Mammary epithelial cell (primary cell): ENCODE measurements at regions of chr3 and their contacts with region 1.

Region 1: GRCh38 chr3:57951066-57951882 is 56.9 kb upstream of the FLNB start:
- DNase-seq: peak; percentile 60
- H3K4me3 ChIP-seq: no peak overlapping the region
- H3K27ac ChIP-seq: peak overlapping the region; percentile 17
- H3K4me1 ChIP-seq: peaks cover 38% of the 10 kb centered on the region
- H3K27me3 ChIP-seq: no peaks in the 10 kb centered on the region
- CTCF ChIP-seq: no peak

Region 2: GRCh38 chr3:57582474-57583168 is 368.7 kb before region 1 on chr3:
- CTCF ChIA-PET with region 1: no interaction called
- dilution Hi-C with region 1: no loop called
- in situ Hi-C with region 1: no loop called
- intact Hi-C with region 1: no loop called
- DNase-seq: peak; percentile 79
- H3K4me3 ChIP-seq: no peak overlapping the region
- H3K27ac ChIP-seq: peak overlapping the region; percentile 59
- H3K4me1 ChIP-seq: peaks cover 7% of the 10 kb centered on the region
- H3K27me3 ChIP-seq: no peaks in the 10 kb centered on the region
- CTCF ChIP-seq: peak; percentile 35 to 69

Region 3: DNA sequence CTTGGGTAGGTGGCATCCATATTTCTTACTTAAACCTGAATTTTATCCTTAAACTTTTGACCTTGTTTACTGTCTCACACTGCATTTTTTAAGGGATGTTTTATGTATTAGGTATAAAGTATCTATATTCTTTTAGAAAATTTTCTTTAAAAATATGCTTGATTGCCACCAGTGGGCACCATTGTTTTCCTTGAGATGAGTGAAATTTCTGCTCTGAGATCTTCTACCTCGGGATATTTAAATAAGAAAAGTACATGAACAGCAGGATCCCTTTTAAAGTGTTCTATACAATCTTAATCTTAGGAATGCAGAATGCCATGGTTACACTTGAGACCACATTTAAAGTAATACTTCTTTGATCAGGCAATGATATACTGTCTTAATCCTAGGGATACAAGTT is 86.4 kb before region 1 on chr3:
- CTCF ChIA-PET with region 1: no interaction called
- dilution Hi-C with region 1: no loop called
- in situ Hi-C with region 1: no loop called
- intact Hi-C with region 1: loop called (anchors 2 kb)
- DNase-seq: no peak
- H3K4me3 ChIP-seq: no peak overlapping the region
- H3K27ac ChIP-seq: no peak overlapping the region
- H3K4me1 ChIP-seq: no peaks in the 10 kb centered on the region
- H3K27me3 ChIP-seq: no peaks in the 10 kb centered on the region
- CTCF ChIP-seq: peak; percentile 27 to 29

Region 4: DNA sequence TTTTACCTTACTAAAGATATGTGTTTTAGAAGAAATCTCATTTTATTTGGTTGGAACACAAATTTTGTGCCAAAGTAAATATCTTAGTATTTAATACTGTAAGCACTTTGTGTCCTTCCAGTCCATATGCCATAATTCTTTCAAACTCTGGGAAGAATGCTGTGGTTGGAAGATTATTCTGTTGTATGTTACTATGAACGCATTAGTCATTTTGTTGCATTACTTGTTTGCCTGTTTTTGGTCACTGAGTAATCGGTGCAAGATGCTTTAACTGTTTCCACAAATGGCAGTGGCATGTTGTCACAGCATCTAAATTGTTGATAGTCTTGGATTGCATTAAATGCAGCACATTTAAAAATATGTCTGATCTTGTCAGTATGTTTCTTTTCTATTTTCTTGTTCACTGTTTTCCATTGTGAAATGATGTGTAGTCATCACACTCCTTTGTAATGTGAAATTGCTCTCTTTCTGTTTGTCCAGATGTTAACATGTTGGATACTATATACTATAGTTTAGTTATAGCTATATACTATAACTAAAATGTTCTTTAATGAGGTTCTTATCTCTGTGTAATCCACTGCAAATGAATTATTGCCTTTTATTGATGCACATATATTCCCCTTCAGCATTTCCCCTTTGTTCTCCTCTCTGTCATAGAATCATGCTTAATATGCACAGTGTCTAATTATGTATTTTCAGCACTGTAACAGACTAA is 33.0 kb before region 1 on chr3:
- CTCF ChIA-PET with region 1: no interaction called
- dilution Hi-C with region 1: no loop called
- in situ Hi-C with region 1: no loop called
- intact Hi-C with region 1: loop called (anchors 2 kb)
- DNase-seq: peak; percentile 77
- H3K4me3 ChIP-seq: no peak overlapping the region
- H3K27ac ChIP-seq: no peak overlapping the region
- H3K4me1 ChIP-seq: peaks cover 10% of the 10 kb centered on the region
- H3K27me3 ChIP-seq: no peaks in the 10 kb centered on the region
- CTCF ChIP-seq: no peak

Region 5: GRCh38 chr3:58041654-58042324 is 90.5 kb after region 1 on chr3:
- CTCF ChIA-PET with region 1: no interaction called
- dilution Hi-C with region 1: loop called (anchors 25 kb)
- in situ Hi-C with region 1: no loop called
- intact Hi-C with region 1: no loop called
- DNase-seq: peak; percentile 55
- H3K4me3 ChIP-seq: no peak overlapping the region
- H3K27ac ChIP-seq: peak overlapping the region; percentile 55
- H3K4me1 ChIP-seq: peaks cover 60% of the 10 kb centered on the region
- H3K27me3 ChIP-seq: no peaks in the 10 kb centered on the region
- CTCF ChIP-seq: no peak